Activated CD4-positive, alpha-beta T cell treated with anti-CD3 and anti-CD28 coated beads for 36 hours (primary cell): ENCODE measurements at regions of chr21 and their contacts with region 1.

Region 1: GRCh38 chr21:34603002-34603709 is 11.8 kb downstream of the RCAN1 start:
- DNase-seq: peak; percentile 85
- ATAC-seq: peak; percentile 89
- H3K4me3 Mint-ChIP-seq: no peak overlapping the region
- H3K27ac Mint-ChIP-seq: no peak overlapping the region
- H3K4me1 Mint-ChIP-seq: no peaks in the 10 kb centered on the region
- H3K27me3 Mint-ChIP-seq: no peaks in the 10 kb centered on the region

Region 2: GRCh38 chr21:34362136-34362444 is 241.1 kb before region 1 on chr21:
- CTCF ChIA-PET with region 1: interaction called, 9 read pairs
- POLR2A ChIA-PET with region 1: no interaction called
- intact Hi-C with region 1: loop called in 1 of 2 experiments (anchors 1 kb)
- DNase-seq: no peak
- ATAC-seq: no peak
- H3K4me3 Mint-ChIP-seq: no peak overlapping the region
- H3K27ac Mint-ChIP-seq: no peak overlapping the region
- H3K4me1 Mint-ChIP-seq: peaks cover 6% of the 10 kb centered on the region
- H3K27me3 Mint-ChIP-seq: peaks cover 8% of the 10 kb centered on the region

Region 3: GRCh38 chr21:34510148-34511142 is 92.7 kb before region 1 on chr21:
- CTCF ChIA-PET with region 1: interaction called, 34 read pairs
- POLR2A ChIA-PET with region 1: no interaction called
- intact Hi-C with region 1: loop called (anchors 1 kb)
- DNase-seq: peak; percentile 83
- ATAC-seq: peak; percentile 93
- H3K4me3 Mint-ChIP-seq: no peak overlapping the region
- H3K27ac Mint-ChIP-seq: no peak overlapping the region
- H3K4me1 Mint-ChIP-seq: no peaks in the 10 kb centered on the region
- H3K27me3 Mint-ChIP-seq: peaks cover 1% of the 10 kb centered on the region